ENCODE measurements at regions of chr22 and their contacts with region 1.

Region 1: DNA sequence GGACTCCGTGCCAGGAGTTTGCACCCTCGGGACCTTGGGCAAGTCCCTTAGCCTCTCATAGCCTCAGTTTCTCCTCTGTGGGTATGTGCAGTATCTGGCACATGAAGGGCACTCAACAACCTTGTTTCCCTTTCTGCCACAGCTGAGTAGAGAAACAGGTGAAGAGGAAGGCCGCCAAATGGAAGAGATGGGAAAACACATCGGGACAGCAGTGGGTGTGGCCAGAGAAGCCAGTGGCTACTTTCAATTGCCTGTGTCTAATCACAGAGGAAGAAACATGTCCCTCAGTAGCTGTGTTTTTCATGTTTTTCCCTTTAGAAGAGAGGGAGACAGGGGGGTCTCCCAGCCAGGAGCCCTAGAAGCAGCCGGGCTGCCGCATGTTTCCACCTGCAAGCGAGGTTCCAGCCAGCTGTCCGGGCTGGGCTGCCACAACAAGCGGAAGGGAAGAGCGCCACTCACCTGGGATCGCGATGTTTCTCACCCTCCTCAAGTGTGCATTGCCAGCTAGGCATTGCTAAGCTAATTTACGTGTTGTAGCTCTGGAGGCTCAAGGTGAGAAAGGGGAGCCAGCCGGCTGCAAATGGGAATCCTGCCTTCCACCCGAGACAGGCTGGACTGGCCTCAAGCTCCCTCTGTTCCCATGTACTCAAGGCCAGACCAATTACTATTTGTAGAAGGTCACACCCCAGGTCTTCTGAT is 16.7 kb downstream of the ASPHD2 start:
- DNase-seq: no peak
- H3K4me3 ChIP-seq: no peak overlapping the region
- H3K27ac ChIP-seq: no peak overlapping the region
- H3K4me1 ChIP-seq: no peaks in the 10 kb centered on the region
- H3K27me3 ChIP-seq: no peaks in the 10 kb centered on the region
- CTCF ChIP-seq: no peak
- EP300 ChIP-seq: no peak
- POLR2A ChIP-seq: no peak
- RAD21 ChIP-seq: no peak

Region 2: GRCh38 chr22:26398741-26399153 is 47.0 kb before region 1 on chr22:
- CTCF ChIA-PET with region 1: interaction called, 23 read pairs
- POLR2A ChIA-PET with region 1: no interaction called
- DNase-seq: peak; percentile 33 to 62
- H3K4me3 ChIP-seq: no peak overlapping the region
- H3K27ac ChIP-seq: no peak overlapping the region
- H3K4me1 ChIP-seq: no peaks in the 10 kb centered on the region
- H3K27me3 ChIP-seq: no peaks in the 10 kb centered on the region
- CTCF ChIP-seq: peak; percentile 66 to 82 (median 79)
- EP300 ChIP-seq: no peak
- POLR2A ChIP-seq: no peak
- RAD21 ChIP-seq: peak; percentile 91 to 92

Region 3: GRCh38 chr22:26428515-26429457 is 16.9 kb before region 1 on chr22 and contains the start of gene ASPHD2:
- CTCF ChIA-PET with region 1: interaction called, 5 read pairs
- POLR2A ChIA-PET with region 1: interaction called, 15 read pairs
- DNase-seq: peak; percentile 9 to 75
- H3K4me3 ChIP-seq: peak within 1 kb of the TSS; percentile 61 to 85 (median 71)
- H3K27ac ChIP-seq: no peak within 1 kb of the TSS
- H3K4me1 ChIP-seq: peaks cover 0 to 8% (median 2%) of the 10 kb centered on the region in 4 experiments; a peak in 4 of 7 replicates
- H3K27me3 ChIP-seq: peaks cover 0 to 6% (median 6%) of the 10 kb centered on the region in 4 experiments; a peak in 4 of 7 replicates
- CTCF ChIP-seq: no peak
- EP300 ChIP-seq: no peak
- POLR2A ChIP-seq: peak; percentile 58 to 70
- RAD21 ChIP-seq: no peak
- total RNA-seq, gene ASPHD2: 11.0 and 11.1 TPM in 2 replicates

Region 4: GRCh38 chr22:26471522-26471921 is 25.8 kb after region 1 on chr22:
- CTCF ChIA-PET with region 1: no interaction called
- POLR2A ChIA-PET with region 1: no interaction called
- DNase-seq: peak in 1 of 2 experiments; percentile 29
- H3K4me3 ChIP-seq: no peak overlapping the region
- H3K27ac ChIP-seq: no peak overlapping the region
- H3K4me1 ChIP-seq: no peaks in the 10 kb centered on the region
- H3K27me3 ChIP-seq: no peaks in the 10 kb centered on the region
- CTCF ChIP-seq: no peak
- EP300 ChIP-seq: no peak
- POLR2A ChIP-seq: no peak
- RAD21 ChIP-seq: no peak

Measured in H1 (cell line).